Activated T-helper 2 cell treated with anti-CD3 and anti-CD28 coated beads, Interferon-gamma antibody, Interleukin-2, Interleukin-4, amounts not matched to agents 10 μg/mL and 5 μg/mL and 100 μg/mL, durations not matched to agents 14 hours and 24 hours and 36 hours (primary cell): ENCODE measurements at regions of chr17 and their contacts with region 1.

Region 1: DNA sequence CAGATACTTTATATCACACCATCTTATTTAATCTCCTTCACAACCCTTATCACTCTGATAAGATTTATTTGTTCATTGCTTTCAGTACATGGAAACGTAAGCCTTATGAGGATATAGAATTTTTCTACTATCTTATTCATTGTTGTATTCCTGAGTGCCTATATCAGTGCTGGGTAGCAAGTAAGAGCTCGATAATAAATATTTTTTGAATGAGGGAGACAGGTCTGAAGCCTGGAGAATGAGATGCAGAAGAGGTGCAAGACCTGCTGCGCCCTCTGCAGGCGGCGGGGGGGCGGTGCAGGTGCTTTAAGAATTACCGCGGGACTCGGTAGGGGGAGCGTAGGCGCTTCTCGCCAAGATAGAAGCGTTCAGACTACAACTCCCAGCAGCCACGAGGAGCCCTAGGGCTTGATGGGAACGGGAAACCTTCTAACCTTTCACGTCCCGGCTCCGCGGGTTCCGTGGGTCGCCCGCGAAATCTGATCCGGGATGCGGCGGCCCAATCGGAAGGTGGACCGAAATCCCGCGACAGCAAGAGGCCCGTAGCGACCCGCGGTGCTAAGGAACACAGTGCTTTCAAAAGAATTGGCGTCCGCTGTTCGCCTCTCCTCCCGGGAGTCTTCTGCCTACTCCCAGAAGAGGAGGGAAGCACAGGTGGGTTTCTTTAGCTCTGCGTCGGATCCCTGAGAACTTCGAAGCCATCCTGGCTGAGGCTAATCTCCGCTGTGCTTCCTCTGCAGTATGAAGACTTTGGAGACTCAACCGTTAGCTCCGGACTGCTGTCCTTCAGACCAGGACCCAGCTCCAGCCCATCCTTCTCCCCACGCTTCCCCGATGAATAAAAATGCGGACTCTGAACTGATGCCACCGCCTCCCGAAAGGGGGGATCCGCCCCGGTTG is at the start of gene WRAP53:
- DNase-seq: peak; percentile 93
- H3K4me3 Mint-ChIP-seq: peak within 1 kb of the TSS; percentile 94
- H3K27ac Mint-ChIP-seq: peak within 1 kb of the TSS; percentile 97
- H3K4me1 Mint-ChIP-seq: peaks cover 34% of the 10 kb centered on the region
- H3K27me3 Mint-ChIP-seq: no peaks in the 10 kb centered on the region
- total RNA-seq, gene WRAP53: 33.2 and 34.5 TPM in 2 replicates

Region 2: DNA sequence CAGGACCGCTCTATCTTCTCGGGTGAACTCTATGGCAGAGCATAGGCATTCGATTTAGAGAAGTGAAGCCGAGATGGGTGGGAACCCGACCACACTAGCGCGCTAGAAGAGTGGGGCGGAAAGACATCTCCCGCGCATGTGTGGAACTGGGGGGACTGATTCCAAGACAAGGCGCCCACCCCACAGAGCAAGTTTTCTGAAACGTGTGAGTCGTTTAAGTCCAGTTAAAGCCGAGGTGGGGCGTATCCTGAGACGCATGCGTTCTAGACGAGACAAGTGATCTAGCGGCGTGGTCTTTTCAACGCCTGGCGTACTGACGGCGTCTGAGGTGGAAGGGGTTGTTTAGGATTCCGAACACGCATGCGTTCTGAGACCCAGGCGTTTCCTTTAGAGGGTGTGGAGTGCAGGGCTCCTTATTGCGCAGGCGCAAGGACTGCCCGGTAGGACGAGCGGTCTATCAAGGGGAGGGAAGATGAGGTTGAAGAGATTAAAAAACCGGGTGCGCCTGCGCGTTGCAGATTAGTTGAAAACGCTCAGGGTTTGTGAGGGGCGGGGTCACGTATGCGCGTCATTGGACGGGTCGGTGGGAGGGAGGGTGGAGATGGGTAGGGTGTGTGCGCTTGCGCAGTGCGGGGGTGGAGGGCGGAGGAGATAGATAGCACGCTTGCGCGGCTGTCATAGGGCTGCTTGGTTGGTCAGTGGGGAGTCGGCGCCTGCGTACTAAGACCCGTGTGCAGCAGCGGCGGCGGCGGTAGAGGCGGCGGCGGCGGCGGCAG is 381.1 kb before region 1 on chr17 and contains the start of gene EIF5A:
- intact Hi-C with region 1: loop called (anchors 2 kb)
- DNase-seq: peak; percentile 99
- H3K4me3 Mint-ChIP-seq: peak within 1 kb of the TSS; percentile 94
- H3K27ac Mint-ChIP-seq: peak within 1 kb of the TSS; percentile 97
- H3K4me1 Mint-ChIP-seq: peaks cover 32% of the 10 kb centered on the region
- H3K27me3 Mint-ChIP-seq: peaks cover under 1% of the 10 kb centered on the region
- total RNA-seq, gene EIF5A: 1,189 and 1,199 TPM in 2 replicates

Region 3: GRCh38 chr17:7435221-7435675 is 252.9 kb before region 1 on chr17 and contains the start of gene TMEM102:
- intact Hi-C with region 1: loop called (anchors 1 kb)
- DNase-seq: peak; percentile 98
- H3K4me3 Mint-ChIP-seq: peak within 1 kb of the TSS; percentile 85
- H3K27ac Mint-ChIP-seq: peak within 1 kb of the TSS; percentile 95
- H3K4me1 Mint-ChIP-seq: peaks cover 28% of the 10 kb centered on the region
- H3K27me3 Mint-ChIP-seq: peaks cover 10% of the 10 kb centered on the region
- total RNA-seq, gene TMEM102: 13.4 and 14.8 TPM in 2 replicates

Region 4: GRCh38 chr17:7614422-7615264 is 73.5 kb before region 1 on chr17 and contains the start of gene FXR2:
- intact Hi-C with region 1: loop called (anchors 1 kb)
- DNase-seq: peak; percentile 99
- H3K4me3 Mint-ChIP-seq: peak within 1 kb of the TSS; percentile 89
- H3K27ac Mint-ChIP-seq: peak within 1 kb of the TSS; percentile 84
- H3K4me1 Mint-ChIP-seq: peaks cover 22% of the 10 kb centered on the region
- H3K27me3 Mint-ChIP-seq: no peaks in the 10 kb centered on the region
- total RNA-seq, gene FXR2: 59.0 and 63.1 TPM in 2 replicates

Region 5: DNA sequence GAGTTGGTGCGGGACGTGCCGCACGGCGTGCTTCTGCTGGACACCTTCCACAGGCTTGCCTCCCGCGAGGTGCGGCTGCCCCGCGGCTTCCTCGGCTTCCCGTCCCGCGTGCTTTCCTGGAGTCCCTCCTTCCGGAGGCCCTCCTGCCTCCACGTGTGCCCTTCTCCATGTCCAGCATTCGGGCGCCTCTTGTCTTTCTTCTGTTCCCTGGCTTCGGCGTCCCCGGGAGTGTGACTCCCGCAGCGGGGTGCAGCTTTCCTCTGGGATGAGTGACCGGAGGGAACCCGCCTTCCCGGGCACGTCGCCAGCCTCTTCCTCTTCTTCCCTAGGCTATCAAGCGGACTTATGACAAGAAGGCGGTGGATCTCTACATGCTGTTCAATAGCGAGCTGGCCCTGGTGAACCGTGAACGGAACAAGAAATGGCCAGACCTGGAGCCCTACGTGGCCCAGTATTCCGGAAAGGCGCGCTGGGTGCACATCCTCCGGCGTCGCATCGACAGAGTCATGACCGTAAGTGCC is 52.4 kb after region 1 on chr17:
- intact Hi-C with region 1: no loop called
- DNase-seq: no peak
- H3K4me3 Mint-ChIP-seq: no peak overlapping the region
- H3K27ac Mint-ChIP-seq: no peak overlapping the region
- H3K4me1 Mint-ChIP-seq: no peaks in the 10 kb centered on the region
- H3K27me3 Mint-ChIP-seq: peaks cover 21% of the 10 kb centered on the region

Region 6: DNA sequence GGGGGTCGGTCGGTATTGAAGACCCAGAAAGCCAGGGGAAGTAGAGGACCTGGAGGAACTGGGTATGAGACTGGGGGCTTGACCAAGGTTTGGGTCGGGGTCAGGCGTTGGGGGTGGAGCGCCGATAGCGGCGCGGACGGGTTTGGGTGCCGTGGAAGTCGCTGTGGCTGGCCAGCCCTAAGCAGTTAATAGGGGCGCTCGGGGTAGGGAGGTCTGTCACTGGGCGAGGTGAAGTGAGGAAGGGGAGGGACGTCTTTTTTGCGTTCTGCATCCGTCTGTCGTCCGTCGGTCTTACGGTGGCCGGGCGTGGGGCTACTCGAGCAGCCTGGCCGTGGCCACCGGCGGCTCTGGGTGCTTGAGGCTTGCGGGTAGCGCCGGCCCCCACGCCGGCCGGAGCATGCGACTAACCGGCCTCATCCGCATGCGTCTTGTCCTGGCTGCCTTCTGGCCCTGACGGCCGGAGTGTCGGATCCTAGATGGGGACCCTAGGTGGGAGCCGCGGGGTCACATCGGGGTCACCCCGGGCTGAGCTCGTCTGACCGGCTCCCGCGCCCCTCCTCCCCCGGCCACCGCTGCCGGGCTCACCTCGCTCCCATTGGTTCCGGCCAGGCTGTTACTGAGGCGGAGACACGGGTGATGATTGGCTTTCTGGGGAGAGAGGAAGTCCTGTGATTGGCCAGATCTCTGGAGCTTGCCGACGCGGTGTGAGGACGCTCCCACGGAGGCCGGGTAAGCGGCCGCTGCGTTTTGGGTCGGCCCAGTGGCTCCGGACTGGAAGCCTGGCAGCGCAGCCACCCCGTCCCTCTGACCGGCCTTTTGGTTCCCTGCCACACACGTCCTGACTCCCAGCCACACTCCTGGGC is 156.4 kb after region 1 on chr17:
- intact Hi-C with region 1: loop called (anchors 5 kb)
- DNase-seq: peak; percentile 86
- H3K4me3 Mint-ChIP-seq: peak overlapping the region; percentile 90
- H3K27ac Mint-ChIP-seq: peak overlapping the region; percentile 100
- H3K4me1 Mint-ChIP-seq: peaks cover 23% of the 10 kb centered on the region
- H3K27me3 Mint-ChIP-seq: no peaks in the 10 kb centered on the region

Region 7: DNA sequence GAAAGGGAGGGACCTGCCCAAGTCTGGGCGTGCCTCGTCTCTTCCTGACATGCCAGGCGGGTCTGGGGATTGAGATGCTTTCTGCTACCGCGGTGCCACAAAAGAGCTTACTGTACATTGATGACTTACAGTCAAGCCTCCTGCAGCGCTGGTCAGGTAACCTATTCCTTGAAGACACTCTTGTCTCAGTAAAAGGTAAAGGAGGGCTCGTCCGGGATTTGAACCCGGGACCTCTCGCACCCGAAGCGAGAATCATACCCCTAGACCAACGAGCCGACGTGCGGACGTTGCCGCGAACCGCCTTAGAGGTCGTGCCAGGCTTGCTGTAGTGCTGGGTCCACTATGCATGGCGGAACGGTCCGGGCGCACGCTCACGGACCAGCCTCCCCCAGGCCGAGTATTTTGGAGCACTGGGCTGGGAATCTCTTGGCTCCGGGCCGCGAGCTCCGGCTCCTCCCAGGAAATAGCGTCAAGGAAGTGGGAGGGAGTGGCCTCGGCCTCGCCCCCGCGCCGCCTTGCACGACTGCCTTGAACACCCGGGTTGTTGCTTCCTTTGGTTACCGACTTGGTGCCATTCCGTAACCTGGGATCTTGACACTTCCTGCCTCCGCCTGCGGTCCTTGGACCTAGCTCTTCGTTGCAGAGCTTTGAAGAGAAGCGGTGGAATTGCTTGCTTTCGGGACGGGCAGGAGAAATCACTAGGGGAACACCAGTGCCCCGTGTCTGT is 534.6 kb after region 1 on chr17:
- intact Hi-C with region 1: loop called (anchors 10 kb)
- DNase-seq: peak; percentile 85
- H3K4me3 Mint-ChIP-seq: peak overlapping the region; percentile 97
- H3K27ac Mint-ChIP-seq: peak overlapping the region; percentile 96
- H3K4me1 Mint-ChIP-seq: peaks cover 43% of the 10 kb centered on the region
- H3K27me3 Mint-ChIP-seq: no peaks in the 10 kb centered on the region